ENCODE measurements at regions of chr1 and their contacts with region 1.

Region 1: DNA sequence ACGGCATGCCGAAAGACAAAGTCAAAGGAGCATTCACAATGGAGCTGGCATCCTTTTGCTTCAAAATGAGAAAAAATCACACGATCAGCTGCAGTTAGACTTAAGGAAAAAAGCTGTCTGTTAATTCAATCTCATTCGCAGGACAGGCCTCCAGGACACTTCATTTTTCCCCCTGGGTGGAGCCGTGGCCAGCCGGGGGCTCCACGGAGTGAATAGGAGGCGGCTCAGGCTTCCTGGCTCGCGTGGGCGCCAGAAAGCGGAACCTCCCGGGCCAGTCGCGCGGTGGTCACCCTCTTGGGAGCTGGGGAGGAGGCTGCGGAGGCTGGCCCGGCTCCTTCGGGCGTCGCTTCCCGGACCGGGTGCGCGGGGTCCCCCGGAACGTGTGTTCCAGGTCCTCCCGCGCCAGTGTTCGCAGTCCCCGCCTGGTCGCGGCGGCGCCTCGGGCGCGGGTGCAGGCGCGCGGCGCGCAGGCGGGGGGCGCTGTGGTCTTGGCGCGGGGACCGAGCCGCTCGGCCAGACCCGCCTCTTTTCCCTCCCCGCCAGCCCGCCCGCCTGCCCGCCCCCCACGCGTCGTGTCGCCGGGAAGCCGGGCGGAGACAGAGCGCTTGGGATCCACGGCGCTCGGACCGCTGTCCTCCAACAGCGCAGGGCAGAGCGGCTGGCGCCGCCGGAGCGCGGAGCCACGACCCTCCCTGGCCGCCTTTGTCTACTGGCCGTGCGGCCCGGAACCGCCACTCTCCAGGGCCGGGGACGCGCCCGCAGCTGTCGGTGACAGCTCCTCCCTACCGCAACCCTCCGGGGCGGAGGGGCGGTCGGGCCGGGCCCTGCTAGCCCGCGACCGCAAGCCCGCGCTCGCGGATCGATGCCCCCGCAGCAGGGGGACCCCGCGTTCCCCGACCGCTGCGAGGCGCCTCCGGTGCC is at the start of gene RHOU:
- DNase-seq: peak; percentile 74
- H3K4me3 Mint-ChIP-seq: peak within 1 kb of the TSS; percentile 77
- H3K27ac Mint-ChIP-seq: no peak within 1 kb of the TSS
- H3K4me1 Mint-ChIP-seq: peaks cover 20% of the 10 kb centered on the region
- H3K27me3 Mint-ChIP-seq: peaks cover 9% of the 10 kb centered on the region
- total RNA-seq, gene RHOU: 0.57 to 0.68 TPM

Region 2: DNA sequence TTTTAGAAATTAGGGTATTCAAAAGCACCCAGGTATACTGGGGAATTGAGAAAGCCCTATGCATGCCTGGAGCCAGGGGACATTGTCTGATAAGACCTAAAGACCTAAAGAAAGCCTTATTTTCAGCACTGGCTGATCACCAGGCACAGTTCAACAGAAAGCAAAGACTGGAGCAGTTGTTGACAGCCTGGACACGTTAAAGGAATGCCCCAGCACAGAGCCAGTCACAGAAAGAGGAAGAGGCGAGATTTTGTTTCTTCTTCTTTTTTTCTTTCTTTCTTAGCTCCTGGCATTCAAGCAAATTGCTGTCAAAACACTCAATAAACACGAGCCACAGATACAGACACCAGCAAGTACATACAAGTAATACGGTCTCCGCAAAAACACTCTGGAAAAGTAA is 207.5 kb before region 1 on chr1:
- CTCF ChIA-PET with region 1: no interaction called
- POLR2A ChIA-PET with region 1: no interaction called
- intact Hi-C with region 1: no loop called
- DNase-seq: no peak
- H3K4me3 Mint-ChIP-seq: no peak overlapping the region
- H3K27ac Mint-ChIP-seq: no peak overlapping the region
- H3K4me1 Mint-ChIP-seq: no peaks in the 10 kb centered on the region
- H3K27me3 Mint-ChIP-seq: peaks cover 39% of the 10 kb centered on the region

Region 3: DNA sequence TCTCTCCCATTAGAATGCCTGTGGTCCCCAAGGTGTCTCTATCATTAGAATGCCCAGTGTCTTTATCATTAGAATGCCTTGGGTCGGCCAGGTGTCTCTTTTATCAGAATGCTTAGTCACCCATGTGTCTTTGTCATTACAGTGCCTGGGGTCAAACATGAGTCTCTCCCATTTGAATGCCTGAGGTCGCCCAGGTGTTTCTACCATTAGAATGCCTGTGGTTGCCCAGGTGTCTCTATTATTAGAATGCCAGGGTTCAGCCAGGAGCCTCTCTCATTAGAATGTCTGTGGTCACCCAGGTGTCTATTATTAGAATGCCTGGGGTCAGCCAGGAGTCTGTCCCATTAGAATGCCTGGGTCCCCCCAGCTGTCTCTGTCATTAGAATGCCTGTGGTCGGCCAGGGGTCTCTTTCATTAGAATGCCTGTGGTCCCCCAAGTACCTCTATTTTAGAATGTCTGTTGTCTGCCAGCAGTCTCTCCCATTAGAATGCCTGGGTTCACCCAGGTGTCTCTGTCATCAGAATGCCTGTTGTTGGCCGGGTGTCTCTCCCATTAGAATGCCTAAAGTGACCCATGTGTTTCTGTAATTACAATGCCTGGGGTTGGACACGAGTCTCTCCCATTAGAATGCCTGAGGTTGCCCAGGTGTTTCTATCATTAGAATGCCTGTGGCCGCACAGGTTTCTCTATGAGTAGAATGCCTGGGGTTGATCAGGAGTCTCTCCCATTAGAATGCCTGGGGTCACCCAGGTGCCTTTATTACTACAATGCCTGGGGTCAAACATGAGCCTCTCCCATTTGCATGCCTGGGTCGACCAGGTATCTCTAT is 190.9 kb before region 1 on chr1:
- CTCF ChIA-PET with region 1: no interaction called
- POLR2A ChIA-PET with region 1: no interaction called
- intact Hi-C with region 1: no loop called
- DNase-seq: no peak
- H3K4me3 Mint-ChIP-seq: no peak overlapping the region
- H3K27ac Mint-ChIP-seq: no peak overlapping the region
- H3K4me1 Mint-ChIP-seq: no peaks in the 10 kb centered on the region
- H3K27me3 Mint-ChIP-seq: peaks cover 4% of the 10 kb centered on the region

Region 4: GRCh38 chr1:228825840-228826484 is 90.8 kb after region 1 on chr1:
- CTCF ChIA-PET with region 1: no interaction called
- POLR2A ChIA-PET with region 1: no interaction called
- intact Hi-C with region 1: no loop called
- DNase-seq: no peak
- H3K4me3 Mint-ChIP-seq: no peak overlapping the region
- H3K27ac Mint-ChIP-seq: no peak overlapping the region
- H3K4me1 Mint-ChIP-seq: peaks cover 25% of the 10 kb centered on the region
- H3K27me3 Mint-ChIP-seq: peaks cover 4% of the 10 kb centered on the region

Region 5: DNA sequence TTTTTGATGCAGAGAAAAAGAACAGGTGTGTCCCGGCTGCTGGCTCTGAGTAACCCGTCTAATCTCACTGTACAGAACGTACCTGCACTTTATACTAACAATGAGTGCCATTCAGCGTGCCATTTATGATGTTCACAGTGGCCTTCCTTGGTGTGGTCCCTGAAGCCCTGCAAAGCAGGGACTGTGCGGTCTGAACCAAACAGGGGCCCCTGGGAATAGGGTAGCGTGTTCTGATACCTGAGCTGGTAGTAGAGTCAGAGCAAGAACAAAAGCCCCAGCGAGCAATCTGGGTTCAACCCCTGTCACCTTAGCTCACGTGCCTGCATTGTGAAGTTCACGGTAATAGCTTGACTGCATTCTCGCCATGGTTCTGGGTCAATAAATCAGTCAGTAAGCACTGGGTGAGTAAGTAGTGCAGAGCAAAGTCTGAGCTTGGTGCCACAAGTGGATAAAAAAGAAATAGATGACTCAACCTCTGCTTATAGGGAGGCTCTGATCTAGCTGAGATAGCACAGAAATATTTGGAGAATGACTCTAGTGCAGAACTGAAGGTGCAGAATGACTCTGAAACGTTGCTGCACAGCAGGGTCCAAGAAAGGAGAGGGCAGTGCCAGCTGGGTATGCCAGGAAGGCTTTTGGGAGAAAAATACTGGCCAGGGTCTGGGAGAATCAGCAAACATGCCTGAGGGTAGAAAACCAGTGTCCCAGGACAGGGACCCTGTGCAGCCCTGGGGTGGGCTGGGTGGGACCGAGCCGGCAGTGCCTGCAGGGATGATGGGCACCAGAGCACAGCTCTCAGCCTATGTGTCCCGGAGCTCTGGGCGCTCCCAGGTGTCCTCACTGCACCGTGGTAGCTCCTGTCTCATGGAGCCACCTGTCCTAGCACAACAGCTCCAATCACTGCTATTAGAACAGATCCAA is 126.0 kb after region 1 on chr1:
- CTCF ChIA-PET with region 1: interaction called, 4 read pairs
- POLR2A ChIA-PET with region 1: no interaction called
- intact Hi-C with region 1: loop called (anchors 5 kb)
- DNase-seq: peak; percentile 71
- H3K4me3 Mint-ChIP-seq: no peak overlapping the region
- H3K27ac Mint-ChIP-seq: no peak overlapping the region
- H3K4me1 Mint-ChIP-seq: peaks cover 34% of the 10 kb centered on the region
- H3K27me3 Mint-ChIP-seq: peaks cover 7% of the 10 kb centered on the region

Region 6: GRCh38 chr1:228921481-228921880 is 186.3 kb after region 1 on chr1:
- CTCF ChIA-PET with region 1: no interaction called
- POLR2A ChIA-PET with region 1: no interaction called
- intact Hi-C with region 1: loop called (anchors 10 kb)
- DNase-seq: no peak
- H3K4me3 Mint-ChIP-seq: no peak overlapping the region
- H3K27ac Mint-ChIP-seq: no peak overlapping the region
- H3K4me1 Mint-ChIP-seq: no peaks in the 10 kb centered on the region
- H3K27me3 Mint-ChIP-seq: no peaks in the 10 kb centered on the region